ENCODE measurements at regions of chr19 and their contacts with region 1.

Region 1: GRCh38 chr19:47436712-47437401 is 17.5 kb upstream of the MEIS3 start:
- DNase-seq: peak; percentile 74
- ATAC-seq: peak; percentile 90
- H3K4me3 ChIP-seq: no peak overlapping the region
- H3K27ac ChIP-seq: no peak overlapping the region
- H3K4me1 ChIP-seq: no peaks in the 10 kb centered on the region
- H3K27me3 ChIP-seq: no peaks in the 10 kb centered on the region
- CTCF ChIP-seq: peak; percentile 76

Region 2: DNA sequence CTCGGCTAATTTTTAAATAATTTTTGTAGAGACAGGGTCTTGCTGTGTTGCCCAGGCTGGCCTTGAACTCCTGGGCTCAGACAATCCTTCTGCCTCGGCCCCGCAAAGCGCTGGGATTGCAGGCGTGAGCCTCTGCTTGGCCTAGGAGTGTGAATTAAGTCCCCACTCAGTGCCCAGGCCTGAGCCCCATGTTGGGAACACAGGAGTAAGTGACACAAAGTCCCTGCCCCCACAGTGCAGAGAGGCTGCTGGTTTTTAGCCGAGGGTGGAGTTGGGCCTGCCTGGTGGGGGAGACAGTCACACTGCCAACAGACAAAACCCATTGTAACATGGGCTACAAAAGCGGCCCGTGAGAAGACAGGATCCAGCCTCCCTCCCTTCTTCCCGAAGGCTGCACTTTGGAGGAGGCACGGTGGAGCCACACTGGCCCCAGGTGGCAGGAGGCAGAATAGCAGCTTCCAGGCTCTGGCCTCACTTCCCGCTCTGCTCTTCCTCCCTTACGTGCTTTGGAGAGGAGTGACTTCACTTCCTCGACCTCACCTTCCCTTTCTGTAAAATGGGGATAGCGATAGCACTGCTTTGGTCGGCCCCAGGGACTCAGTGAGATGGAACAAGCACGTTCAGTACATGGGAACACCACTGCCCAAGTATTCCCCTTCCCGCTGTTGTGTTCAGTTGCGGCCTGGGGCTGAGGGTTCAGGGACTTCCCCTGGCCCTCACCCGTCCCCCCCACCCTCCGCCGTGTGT is 261.2 kb after region 1 on chr19:
- CTCF ChIA-PET with region 1: interaction called, 4 read pairs
- POLR2A ChIA-PET with region 1: no interaction called
- intact Hi-C with region 1: loop called (anchors 2 kb)
- DNase-seq: peak; percentile 83
- ATAC-seq: peak; percentile 86
- H3K4me3 ChIP-seq: no peak overlapping the region
- H3K27ac ChIP-seq: peak overlapping the region; percentile 30
- H3K4me1 ChIP-seq: 0 out of 2 replicates have a peak, but pooled peaks cover 3% of the 10 kb centered on the region
- H3K27me3 ChIP-seq: no peaks in the 10 kb centered on the region
- CTCF ChIP-seq: peak; percentile 88

Region 3: GRCh38 chr19:47707135-47707925 is 270.5 kb after region 1 on chr19:
- CTCF ChIA-PET with region 1: interaction called, 6 read pairs
- POLR2A ChIA-PET with region 1: no interaction called
- intact Hi-C with region 1: loop called (anchors 1 kb)
- DNase-seq: peak; percentile 88
- ATAC-seq: peak; percentile 90
- H3K4me3 ChIP-seq: no peak overlapping the region
- H3K27ac ChIP-seq: no peak overlapping the region
- H3K4me1 ChIP-seq: no peaks in the 10 kb centered on the region
- H3K27me3 ChIP-seq: no peaks in the 10 kb centered on the region
- CTCF ChIP-seq: peak; percentile 74

Measured in PC-3 (cell line).